OCI-LY7 (cell line): ENCODE measurements at regions of chr18 and their contacts with region 1.

Region 1: DNA sequence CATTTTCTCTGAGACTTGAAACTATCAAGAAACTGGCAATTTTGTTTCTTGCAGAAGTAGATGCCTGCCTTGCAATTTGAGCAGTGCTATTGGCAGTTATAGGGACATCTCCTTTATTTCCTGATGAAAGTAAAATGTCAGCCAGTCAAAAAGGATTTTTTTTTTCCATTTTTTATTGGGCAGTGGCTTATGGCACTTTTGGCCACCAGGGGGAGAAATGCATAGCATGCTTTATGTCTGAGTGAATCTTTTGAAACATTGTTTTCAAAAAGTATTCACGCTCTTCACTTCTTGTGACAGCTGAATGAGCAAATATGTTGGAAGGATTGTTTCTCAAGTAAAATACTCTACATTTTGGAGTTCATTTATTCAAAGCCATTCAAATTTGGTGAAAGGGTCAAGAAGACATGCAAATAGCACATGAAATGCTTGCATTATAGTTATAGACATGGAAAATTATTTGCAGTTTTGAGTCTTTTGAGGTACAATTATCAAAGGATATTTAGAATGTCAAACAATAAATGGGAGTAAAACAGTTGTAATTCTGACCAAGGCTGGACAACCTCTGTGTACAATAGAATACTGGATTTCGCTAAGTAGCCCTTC is 491.0 kb downstream of the CDH2 start:
- DNase-seq: peak; percentile 40
- H3K4me3 ChIP-seq: no peak overlapping the region
- H3K27ac ChIP-seq: no peak overlapping the region
- H3K4me1 ChIP-seq: no peaks in the 10 kb centered on the region
- CTCF ChIP-seq: peak; percentile 87

Region 2: GRCh38 chr18:27652480-27653121 is 33.3 kb before region 1 on chr18:
- CTCF ChIA-PET with region 1: no interaction called
- POLR2A ChIA-PET with region 1: no interaction called
- intact Hi-C with region 1: no loop called
- DNase-seq: no peak
- H3K4me3 ChIP-seq: no peak overlapping the region
- H3K27ac ChIP-seq: no peak overlapping the region
- H3K4me1 ChIP-seq: no peaks in the 10 kb centered on the region
- CTCF ChIP-seq: no peak

Region 3: GRCh38 chr18:27750014-27750413 is 64.1 kb after region 1 on chr18:
- CTCF ChIA-PET with region 1: no interaction called
- POLR2A ChIA-PET with region 1: no interaction called
- intact Hi-C with region 1: loop called (anchors 1 kb)
- DNase-seq: peak; percentile 9
- H3K4me3 ChIP-seq: no peak overlapping the region
- H3K27ac ChIP-seq: no peak overlapping the region
- H3K4me1 ChIP-seq: no peaks in the 10 kb centered on the region
- CTCF ChIP-seq: peak; percentile 70

Region 4: GRCh38 chr18:27871726-27872125 is 185.8 kb after region 1 on chr18:
- CTCF ChIA-PET with region 1: no interaction called
- POLR2A ChIA-PET with region 1: no interaction called
- intact Hi-C with region 1: no loop called
- DNase-seq: no peak
- H3K4me3 ChIP-seq: no peak overlapping the region
- H3K27ac ChIP-seq: no peak overlapping the region
- H3K4me1 ChIP-seq: no peaks in the 10 kb centered on the region
- CTCF ChIP-seq: no peak

Region 5: GRCh38 chr18:28189400-28190239 is 503.7 kb after region 1 on chr18:
- CTCF ChIA-PET with region 1: no interaction called
- POLR2A ChIA-PET with region 1: no interaction called
- intact Hi-C with region 1: loop called (anchors 10 kb)
- DNase-seq: peak; percentile 43
- H3K4me3 ChIP-seq: no peak overlapping the region
- H3K27ac ChIP-seq: no peak overlapping the region
- H3K4me1 ChIP-seq: no peaks in the 10 kb centered on the region
- CTCF ChIP-seq: peak; percentile 82